ENCODE measurements at regions of chr7 and their contacts with region 1.

Region 1: DNA sequence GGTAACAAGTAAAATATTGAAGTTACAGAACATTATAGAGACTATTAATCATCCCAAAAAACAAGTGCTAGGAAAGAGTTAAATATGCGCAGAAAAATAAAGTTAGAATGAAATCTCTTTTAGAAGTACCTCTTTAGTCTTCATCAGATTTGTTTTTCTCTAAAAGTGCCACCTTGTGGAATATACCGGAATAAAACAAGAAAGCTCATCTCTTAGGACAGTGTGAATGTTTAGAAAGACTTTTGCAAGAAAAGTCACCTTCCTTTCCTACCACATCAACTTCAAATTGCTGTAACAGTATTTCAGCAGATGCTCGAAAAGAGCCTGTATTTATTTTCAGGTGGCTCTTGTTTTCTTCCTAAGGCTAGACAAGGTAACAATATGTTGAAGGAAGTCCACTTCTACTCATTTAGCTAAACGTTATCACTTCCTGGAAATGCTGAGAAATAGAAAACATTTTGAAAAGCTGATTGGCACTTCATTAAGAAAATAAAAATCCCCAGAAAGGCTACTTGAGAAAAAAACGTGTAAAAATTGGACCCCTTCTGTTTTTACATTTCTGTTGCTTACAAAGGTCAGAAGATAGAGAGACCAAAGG is 19.8 kb upstream of the FAM133B start:
- DNase-seq: no peak
- H3K4me3 ChIP-seq: no peak overlapping the region
- CTCF ChIP-seq: no peak

Region 2: DNA sequence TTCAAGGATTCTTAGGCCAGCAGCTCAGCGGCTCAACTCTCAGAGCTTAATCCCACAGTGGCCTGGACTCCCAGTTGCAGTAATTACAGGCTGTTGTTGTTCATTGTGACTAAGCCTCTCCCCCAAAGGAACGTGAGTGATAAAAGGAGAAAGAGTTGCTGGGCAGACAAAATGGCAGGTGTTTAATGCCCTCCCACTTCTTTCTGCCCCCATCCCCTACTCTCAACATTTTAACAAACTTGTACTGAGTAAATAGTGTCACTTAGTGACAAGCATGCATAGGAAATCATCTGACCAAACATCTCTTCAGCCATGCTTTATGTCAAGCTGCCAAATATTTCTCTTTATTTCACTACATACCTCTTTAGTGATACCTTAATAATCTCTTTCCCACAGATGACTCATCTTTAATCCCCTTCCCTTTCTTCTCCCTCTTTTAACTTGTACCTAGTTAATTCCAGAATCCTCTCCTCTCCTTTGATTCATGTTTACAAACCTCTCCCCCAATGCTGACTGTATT is 717.1 kb before region 1 on chr7:
- CTCF ChIA-PET with region 1: no interaction called
- POLR2A ChIA-PET with region 1: no interaction called
- DNase-seq: no peak
- H3K4me3 ChIP-seq: no peak overlapping the region
- CTCF ChIP-seq: no peak

Region 3: DNA sequence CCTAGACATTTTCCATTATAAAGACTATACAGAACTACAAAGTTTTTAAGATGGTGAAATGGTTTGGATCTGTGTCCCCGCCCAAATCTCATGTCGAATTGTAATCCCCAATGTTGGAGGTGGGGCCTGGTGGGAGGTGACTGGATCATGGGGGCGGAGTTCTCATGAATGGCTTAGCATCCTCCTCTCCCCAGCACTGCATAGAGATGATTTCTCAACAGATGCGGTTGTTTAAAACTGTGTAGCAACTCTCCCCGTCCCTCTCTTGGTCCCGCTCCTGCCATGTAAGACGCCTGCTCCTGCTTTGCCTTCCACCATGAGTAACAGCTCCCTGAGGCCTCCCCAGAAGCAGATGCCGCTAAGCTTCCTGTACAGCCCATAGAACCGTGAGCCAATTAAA is 21.5 kb before region 1 on chr7:
- CTCF ChIA-PET with region 1: interaction called, 17 read pairs
- POLR2A ChIA-PET with region 1: interaction called, 5 read pairs
- DNase-seq: no peak
- H3K4me3 ChIP-seq: peak overlapping the region; percentile 87
- CTCF ChIP-seq: no peak

Region 4: GRCh38 chr7:92598310-92598981 is 11.6 kb before region 1 on chr7:
- CTCF ChIA-PET with region 1: interaction called, 11 read pairs
- POLR2A ChIA-PET with region 1: no interaction called
- DNase-seq: no peak
- H3K4me3 ChIP-seq: no peak overlapping the region
- CTCF ChIP-seq: no peak

Region 5: GRCh38 chr7:93231799-93232672 is 622.0 kb after region 1 on chr7 and contains the start of gene VPS50:
- CTCF ChIA-PET with region 1: no interaction called
- POLR2A ChIA-PET with region 1: no interaction called
- DNase-seq: peak; percentile 68
- H3K4me3 ChIP-seq: peak within 1 kb of the TSS; percentile 92
- CTCF ChIP-seq: no peak